IMR-90 (cell line): ENCODE measurements at regions of chr15 and their contacts with region 1.

Region 1: DNA sequence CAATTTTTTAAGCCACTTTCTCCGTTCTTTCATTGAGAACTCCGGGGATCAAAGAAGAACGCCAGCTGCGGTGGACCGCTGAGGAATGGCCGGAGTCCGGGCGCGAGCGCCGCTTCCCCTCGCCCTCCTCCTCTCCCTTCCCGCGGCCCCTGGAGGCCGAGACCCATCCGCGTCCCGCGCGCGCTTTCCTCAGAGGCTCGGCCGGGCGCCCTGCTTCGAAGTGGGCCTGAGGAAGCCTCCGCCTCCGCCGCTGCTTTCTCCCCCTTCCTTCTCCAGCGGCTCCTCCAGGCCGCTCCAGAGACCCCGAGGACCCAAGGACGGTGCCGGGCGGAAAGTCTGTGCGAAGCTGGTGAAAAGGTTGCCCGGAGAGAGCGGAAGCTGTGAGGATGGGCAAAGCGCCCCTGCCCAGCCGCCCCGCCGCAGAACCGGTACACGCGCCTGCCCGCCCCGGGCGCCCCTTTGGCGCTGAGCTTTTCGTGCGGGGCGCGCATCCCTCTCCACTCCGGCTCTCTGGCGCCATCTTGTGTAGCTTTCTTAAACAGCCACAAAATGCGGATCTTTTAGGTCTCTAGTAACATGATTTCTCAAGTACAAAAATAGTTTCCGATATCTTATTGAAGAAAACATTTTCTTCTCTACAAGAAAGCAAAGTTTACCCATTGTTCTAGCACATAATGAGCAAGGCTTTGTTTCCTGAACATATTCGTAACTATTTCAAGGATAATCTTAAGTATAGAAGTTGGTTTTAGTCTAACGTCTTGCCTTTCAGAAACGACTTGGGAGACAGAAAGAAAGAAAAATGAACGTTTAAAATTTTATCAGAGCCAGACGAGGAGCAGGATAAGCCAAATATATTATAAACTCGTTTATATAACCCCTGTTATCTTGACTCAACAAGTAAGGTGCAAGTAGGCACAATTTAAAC is 59.2 kb upstream of the FAM174B start:
- DNase-seq: peak; percentile 66
- ATAC-seq: peak; percentile 94
- H3K4me3 ChIP-seq: peak overlapping the region; percentile 50
- H3K27ac ChIP-seq: no peak overlapping the region
- H3K4me1 ChIP-seq: no peaks in the 10 kb centered on the region; the same call in 1 of the 2 replicates
- H3K27me3 ChIP-seq: no peaks in the 10 kb centered on the region; the same call in 1 of the 2 replicates
- CTCF ChIP-seq: peak; percentile 90
- POLR2A ChIP-seq: no peak
- RAD21 ChIP-seq: peak; percentile 81

Region 2: DNA sequence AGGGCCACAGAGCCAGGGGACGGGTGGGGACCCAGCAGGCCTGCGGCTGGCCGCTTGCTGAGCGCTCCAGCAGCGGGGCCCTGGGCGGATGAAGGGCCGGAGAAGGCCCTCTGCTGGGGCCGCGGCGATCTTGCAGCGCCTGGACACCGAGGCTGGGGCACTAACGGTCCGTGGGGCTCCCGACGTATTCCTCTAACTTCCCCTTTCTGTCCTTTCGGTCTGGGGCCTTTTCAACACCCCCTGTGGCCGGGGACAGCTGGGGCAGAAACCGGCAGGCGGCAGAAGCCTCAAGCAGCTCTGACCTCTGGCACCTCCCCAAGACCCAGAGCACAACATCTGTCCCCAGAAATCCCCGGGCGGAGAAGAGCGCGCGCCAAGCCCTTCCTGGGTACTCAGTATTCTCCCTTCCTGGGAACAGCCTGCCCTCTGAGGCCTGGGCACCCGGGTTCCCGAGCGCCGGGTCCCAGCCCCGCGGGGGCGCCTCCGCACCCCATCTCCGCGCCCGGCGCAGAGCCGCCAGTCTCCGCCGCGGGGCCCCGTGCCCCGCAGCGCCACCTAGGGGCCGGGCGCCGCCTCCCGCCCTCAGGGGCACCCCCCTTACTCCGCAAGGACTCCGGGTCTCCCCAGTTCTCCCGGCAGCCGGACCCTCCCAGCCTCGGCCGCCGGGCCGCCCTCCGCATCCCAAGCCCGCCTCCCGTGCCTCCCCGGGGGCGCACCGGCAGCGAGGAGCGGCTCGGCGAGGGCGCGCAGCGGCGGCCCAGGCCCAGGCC is 861.8 kb before region 1 on chr15:
- CTCF ChIA-PET with region 1: no interaction called
- POLR2A ChIA-PET with region 1: no interaction called
- dilution Hi-C with region 1: no loop called
- in situ Hi-C with region 1: loop called (anchors 25 kb)
- intact Hi-C with region 1: no loop called
- DNase-seq: peak; percentile 56
- ATAC-seq: peak; percentile 83
- H3K4me3 ChIP-seq: peak overlapping the region; percentile 90
- H3K27ac ChIP-seq: peak overlapping the region; percentile 53
- H3K4me1 ChIP-seq: peaks cover 5% of the 10 kb centered on the region; the same call in 1 of the 2 replicates
- H3K27me3 ChIP-seq: no peaks in the 10 kb centered on the region; the same call in 1 of the 2 replicates
- CTCF ChIP-seq: peak; percentile 72
- POLR2A ChIP-seq: no peak
- RAD21 ChIP-seq: peak; percentile 52

Region 3: DNA sequence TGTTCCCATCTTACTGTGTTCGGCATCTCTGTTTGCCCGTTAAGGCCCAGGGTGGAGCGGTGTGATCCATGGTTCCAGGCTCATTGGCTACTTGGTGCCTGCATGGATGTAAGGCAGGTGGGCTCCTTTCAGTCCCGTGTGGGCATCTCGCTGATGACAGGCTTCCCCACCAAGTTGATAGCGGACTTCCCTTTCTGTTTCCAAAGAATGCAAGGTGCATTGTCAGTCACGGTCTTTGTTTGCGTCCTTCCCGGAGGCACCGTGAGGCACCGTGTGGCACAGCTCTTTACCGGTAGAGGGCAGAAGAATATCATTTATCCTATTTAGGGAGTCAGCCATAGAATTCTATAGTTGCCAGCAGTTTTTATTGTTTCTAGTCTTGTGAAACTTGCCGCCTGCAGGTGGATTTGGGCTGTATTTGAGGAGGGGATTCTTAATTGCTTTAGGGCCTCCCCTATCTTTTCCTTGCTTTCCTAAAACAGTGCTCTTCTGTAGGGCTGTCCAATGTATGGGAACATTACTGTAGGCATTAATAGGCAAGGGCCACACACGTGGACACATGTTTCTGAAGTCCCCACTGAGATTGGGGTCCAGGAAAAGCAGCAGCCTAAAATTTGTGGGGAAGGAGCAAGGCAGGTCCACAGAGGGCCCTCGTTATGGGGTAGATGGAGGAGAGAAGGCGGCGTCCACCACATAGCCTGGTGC is 617.1 kb before region 1 on chr15:
- CTCF ChIA-PET with region 1: interaction called, 5 read pairs
- POLR2A ChIA-PET with region 1: no interaction called
- dilution Hi-C with region 1: no loop called
- in situ Hi-C with region 1: loop called (anchors 5 kb)
- intact Hi-C with region 1: loop called (anchors 1 kb)
- DNase-seq: peak; percentile 46
- ATAC-seq: peak; percentile 98
- H3K4me3 ChIP-seq: no peak overlapping the region
- H3K27ac ChIP-seq: no peak overlapping the region
- H3K4me1 ChIP-seq: no peaks in the 10 kb centered on the region
- H3K27me3 ChIP-seq: no peaks in the 10 kb centered on the region
- CTCF ChIP-seq: peak; percentile 86
- POLR2A ChIP-seq: no peak
- RAD21 ChIP-seq: peak; percentile 82

Region 4: DNA sequence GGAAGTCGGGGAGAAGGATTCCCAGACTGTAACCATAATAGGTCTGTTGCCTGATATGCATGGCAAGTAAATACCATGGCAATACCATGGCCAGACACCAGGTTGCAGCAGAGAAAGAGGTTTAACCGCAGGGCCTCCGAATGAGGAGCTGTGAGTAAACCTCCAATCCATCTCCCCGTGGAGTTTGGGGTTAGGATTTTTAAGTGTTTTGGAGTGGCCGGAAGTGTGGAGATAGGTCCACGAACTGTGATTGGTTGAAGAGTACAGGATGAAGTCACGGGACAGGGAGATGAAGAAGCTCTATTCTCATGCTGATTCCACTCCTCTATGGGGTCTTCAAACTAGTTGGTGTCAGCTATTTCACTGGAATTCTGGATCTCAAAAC is 193.1 kb before region 1 on chr15:
- CTCF ChIA-PET with region 1: interaction called, 10 read pairs
- POLR2A ChIA-PET with region 1: no interaction called
- dilution Hi-C with region 1: no loop called
- in situ Hi-C with region 1: loop called (anchors 5 kb)
- intact Hi-C with region 1: loop called (anchors 1 kb)
- DNase-seq: peak; percentile 59
- ATAC-seq: peak; percentile 85
- H3K4me3 ChIP-seq: no peak overlapping the region
- H3K27ac ChIP-seq: no peak overlapping the region
- H3K4me1 ChIP-seq: no peaks in the 10 kb centered on the region
- H3K27me3 ChIP-seq: no peaks in the 10 kb centered on the region
- CTCF ChIP-seq: peak; percentile 43
- POLR2A ChIP-seq: no peak
- RAD21 ChIP-seq: peak; percentile 48

Region 5: DNA sequence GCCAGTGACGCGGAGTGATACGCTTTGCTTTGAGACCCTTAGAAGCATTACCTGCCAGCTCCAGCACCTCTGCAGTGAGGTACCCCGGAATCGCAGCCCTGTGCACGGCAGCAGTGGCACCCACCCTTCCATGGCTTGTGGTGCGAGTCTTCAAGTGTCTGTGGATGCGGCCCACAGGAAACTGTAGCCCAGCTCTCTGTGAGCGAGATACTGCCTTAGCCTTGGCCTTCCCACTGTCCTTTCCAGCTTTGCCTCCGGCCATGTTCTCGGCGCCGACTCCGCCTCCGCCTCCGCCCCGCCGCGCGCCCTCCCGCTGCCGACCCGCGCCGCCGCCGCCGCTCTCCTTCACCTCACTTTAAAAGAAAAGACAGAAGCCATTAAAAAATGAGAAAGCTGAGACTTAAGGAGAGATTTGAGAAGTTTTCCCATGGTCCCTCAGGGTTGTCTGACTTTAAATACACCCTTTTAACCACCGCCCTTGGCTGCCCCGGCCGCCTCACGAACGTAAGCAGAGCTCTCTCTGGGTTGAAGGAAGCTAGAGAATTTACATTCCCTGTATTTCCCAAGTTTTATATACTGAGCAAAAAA is 19.3 kb after region 1 on chr15:
- CTCF ChIA-PET with region 1: no interaction called
- POLR2A ChIA-PET with region 1: interaction called, 10 read pairs
- dilution Hi-C with region 1: no loop called
- in situ Hi-C with region 1: no loop called
- intact Hi-C with region 1: no loop called
- DNase-seq: peak; percentile 11
- ATAC-seq: peak; percentile 89
- H3K4me3 ChIP-seq: peak overlapping the region; percentile 45
- H3K27ac ChIP-seq: 0 out of 2 replicates have a peak overlapping the region, but pooled peaks have one; percentile 55
- H3K4me1 ChIP-seq: peaks cover 2% of the 10 kb centered on the region; the same call in 1 of the 2 replicates
- H3K27me3 ChIP-seq: no peaks in the 10 kb centered on the region
- CTCF ChIP-seq: no peak
- POLR2A ChIP-seq: no peak
- RAD21 ChIP-seq: no peak